OCI-LY7 (cell line): ENCODE measurements at regions of chr14 and their contacts with region 1.

Region 1: DNA sequence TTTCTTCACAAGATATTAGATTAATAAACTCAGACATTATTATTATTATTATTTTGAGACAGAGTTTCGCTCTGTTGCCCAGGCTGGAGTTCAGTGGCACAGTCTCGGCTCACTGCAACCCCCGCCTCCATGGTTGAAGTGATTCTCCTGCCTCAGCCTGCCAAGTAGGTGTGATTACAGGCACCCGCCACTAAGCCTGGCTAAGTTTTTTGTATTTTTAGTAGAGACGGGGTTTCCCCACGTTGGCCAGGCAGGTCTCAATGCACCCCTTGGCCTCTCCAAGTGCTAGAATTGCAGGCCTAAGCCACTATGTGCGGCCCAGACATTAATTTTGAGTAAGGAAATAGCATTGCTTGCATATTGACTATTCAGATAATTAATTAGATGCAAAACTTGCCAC is 554.9 kb upstream of the LRFN5 start:
- DNase-seq: no peak
- H3K4me3 ChIP-seq: no peak overlapping the region
- H3K27ac ChIP-seq: no peak overlapping the region
- H3K4me1 ChIP-seq: no peaks in the 10 kb centered on the region
- CTCF ChIP-seq: no peak

Region 2: DNA sequence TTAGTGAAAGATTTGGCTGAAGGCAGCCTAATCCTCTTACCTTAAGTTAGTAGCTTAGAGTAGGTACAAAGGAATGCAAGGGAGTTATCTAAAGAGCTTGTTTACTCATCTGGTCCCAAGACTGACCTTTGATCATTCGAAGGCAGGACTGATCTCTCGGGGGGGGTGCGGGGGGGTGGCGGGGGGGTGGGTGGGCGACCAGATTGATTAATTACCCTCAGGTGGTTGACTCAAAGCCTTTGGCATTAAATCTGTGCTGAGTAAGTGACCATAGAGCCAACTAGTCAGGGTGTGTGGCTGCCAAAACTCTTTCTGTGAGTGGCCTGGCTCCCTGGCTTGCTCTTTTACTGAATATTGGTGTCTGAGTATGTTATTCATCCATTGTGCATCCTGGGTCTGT is 887.7 kb before region 1 on chr14:
- CTCF ChIA-PET with region 1: no interaction called
- POLR2A ChIA-PET with region 1: no interaction called
- intact Hi-C with region 1: loop called (anchors 5 kb)
- DNase-seq: no peak
- H3K4me3 ChIP-seq: no peak overlapping the region
- H3K27ac ChIP-seq: no peak overlapping the region
- H3K4me1 ChIP-seq: no peaks in the 10 kb centered on the region
- CTCF ChIP-seq: no peak

Region 3: GRCh38 chr14:41000350-41000749 is 51.5 kb before region 1 on chr14:
- CTCF ChIA-PET with region 1: no interaction called
- POLR2A ChIA-PET with region 1: no interaction called
- intact Hi-C with region 1: no loop called
- DNase-seq: no peak
- H3K4me3 ChIP-seq: no peak overlapping the region
- H3K27ac ChIP-seq: no peak overlapping the region
- H3K4me1 ChIP-seq: no peaks in the 10 kb centered on the region
- CTCF ChIP-seq: no peak